Panc1 (cell line): ENCODE measurements at regions of chr16 and their contacts with region 1.

Region 1: DNA sequence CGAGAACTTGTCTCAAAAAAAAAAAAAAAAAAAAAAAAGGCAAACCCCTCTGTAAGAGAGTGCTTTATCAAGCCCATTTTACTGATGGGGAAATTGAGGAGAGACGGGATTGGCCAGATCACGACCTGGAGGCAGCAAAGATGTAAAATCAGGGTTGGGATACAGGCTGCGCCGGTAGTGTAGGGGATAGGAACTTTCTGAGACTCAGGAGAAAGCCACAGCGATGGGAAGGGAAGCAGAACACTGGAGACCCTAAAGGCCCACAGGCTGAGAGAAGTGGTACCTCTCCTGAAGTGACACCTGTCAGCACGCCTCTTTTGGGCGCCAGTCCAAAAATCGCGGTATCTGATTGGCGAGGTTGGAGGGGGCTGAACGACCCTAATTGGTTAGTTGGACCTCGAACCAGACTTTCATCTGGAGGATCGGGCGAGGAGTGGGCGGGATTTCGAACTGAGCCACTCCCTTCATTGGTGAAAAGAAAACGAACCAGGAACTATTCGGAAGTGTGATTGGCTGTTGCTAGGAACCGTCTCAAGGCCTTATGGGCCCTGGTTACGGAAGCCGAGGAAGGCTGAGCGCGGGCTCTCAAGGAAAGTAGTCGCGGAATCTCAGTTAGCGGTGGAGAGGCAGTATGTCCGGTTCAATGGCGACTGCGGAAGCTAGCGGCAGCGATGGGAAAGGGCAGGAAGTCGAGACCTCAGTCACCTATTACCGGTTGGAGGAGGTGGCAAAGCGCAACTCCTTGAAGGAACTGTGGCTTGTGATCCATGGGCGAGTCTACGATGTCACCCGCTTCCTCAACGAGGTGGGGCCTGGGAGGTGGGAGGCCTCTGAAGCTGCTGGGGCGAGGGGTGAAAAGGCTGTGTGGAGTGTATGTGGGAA is at the start of gene CYB5B:
- DNase-seq: peak; percentile 94
- ATAC-seq: peak; percentile 95
- H3K4me3 ChIP-seq: peak within 1 kb of the TSS; percentile 83 to 87
- H3K27ac ChIP-seq: peak within 1 kb of the TSS; percentile 96
- H3K4me1 ChIP-seq: peaks cover 33% of the 10 kb centered on the region
- H3K27me3 ChIP-seq: no peaks in the 10 kb centered on the region
- CTCF ChIP-seq: no peak
- total RNA-seq, gene CYB5B: 326 TPM

Region 2: DNA sequence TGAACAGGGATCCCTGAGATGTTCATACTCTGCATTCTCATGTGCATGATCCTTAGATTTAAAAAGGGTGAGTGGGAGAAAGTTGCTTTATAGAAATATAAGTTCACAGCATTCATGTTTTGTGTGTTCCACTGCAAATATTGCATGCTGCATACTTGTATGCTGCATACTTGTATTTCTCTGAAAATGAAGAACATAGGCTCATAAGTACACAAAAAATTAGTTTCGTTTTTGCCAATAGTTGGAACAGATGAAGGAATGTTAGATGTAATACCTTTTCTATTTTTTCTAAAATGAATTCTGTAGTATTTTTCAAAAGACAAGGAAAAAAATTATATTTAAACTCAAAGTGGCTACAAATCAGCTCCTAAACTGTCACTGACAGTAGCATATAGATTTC is 220.5 kb after region 1 on chr16:
- CTCF ChIA-PET with region 1: no interaction called
- POLR2A ChIA-PET with region 1: interaction called, 15 read pairs
- in situ Hi-C with region 1: no loop called
- intact Hi-C with region 1: no loop called
- DNase-seq: no peak
- ATAC-seq: no peak
- H3K4me3 ChIP-seq: no peak overlapping the region
- H3K27ac ChIP-seq: no peak overlapping the region
- H3K4me1 ChIP-seq: peaks cover 4% of the 10 kb centered on the region
- H3K27me3 ChIP-seq: no peaks in the 10 kb centered on the region
- CTCF ChIP-seq: no peak